Calu3 (cell line): ENCODE measurements at regions of chr13 and their contacts with region 1.

Region 1: GRCh38 chr13:97030705-97031452 is 36.6 kb upstream of the OXGR1 start:
- DNase-seq: no peak
- H3K4me3 Mint-ChIP-seq: no peak overlapping the region
- H3K27ac Mint-ChIP-seq: no peak overlapping the region
- H3K4me1 Mint-ChIP-seq: no peaks in the 10 kb centered on the region
- H3K27me3 Mint-ChIP-seq: no peaks in the 10 kb centered on the region
- CTCF ChIP-seq: no peak

Region 2: GRCh38 chr13:96822895-96823294 is 208.0 kb before region 1 on chr13:
- CTCF ChIA-PET with region 1: no interaction called
- intact Hi-C with region 1: loop called (anchors 5 kb)
- DNase-seq: peak; percentile 4
- H3K4me3 Mint-ChIP-seq: no peak overlapping the region
- H3K27ac Mint-ChIP-seq: no peak overlapping the region
- H3K4me1 Mint-ChIP-seq: no peaks in the 10 kb centered on the region
- H3K27me3 Mint-ChIP-seq: no peaks in the 10 kb centered on the region
- CTCF ChIP-seq: no peak

Region 3: GRCh38 chr13:97082461-97083207 is 51.8 kb after region 1 on chr13:
- CTCF ChIA-PET with region 1: no interaction called
- intact Hi-C with region 1: loop called (anchors 10 kb)
- DNase-seq: no peak
- H3K4me3 Mint-ChIP-seq: no peak overlapping the region
- H3K27ac Mint-ChIP-seq: no peak overlapping the region
- H3K4me1 Mint-ChIP-seq: no peaks in the 10 kb centered on the region
- H3K27me3 Mint-ChIP-seq: no peaks in the 10 kb centered on the region
- CTCF ChIP-seq: no peak

Region 4: DNA sequence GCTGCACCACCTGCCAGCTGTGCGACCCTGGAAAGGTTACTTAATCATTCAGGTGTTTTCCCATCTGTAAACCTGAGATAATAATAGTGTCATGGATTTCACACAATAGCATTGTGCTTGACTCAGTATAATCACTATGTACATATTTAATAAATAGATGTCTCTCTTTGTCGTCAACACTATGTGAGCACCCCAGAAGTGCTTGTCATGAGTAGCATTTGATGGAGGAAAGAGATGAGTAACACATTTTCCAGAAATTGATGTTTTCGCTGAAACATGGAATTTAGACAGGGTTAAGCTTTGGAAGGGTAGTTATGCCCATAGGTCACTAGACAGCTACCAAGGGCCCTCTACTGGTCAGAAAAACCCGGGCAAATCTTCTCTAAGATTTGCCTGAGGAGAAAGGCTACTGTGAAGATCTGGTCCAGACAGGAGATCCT is 181.7 kb after region 1 on chr13:
- CTCF ChIA-PET with region 1: no interaction called
- intact Hi-C with region 1: loop called (anchors 1 kb)
- DNase-seq: no peak
- H3K4me3 Mint-ChIP-seq: no peak overlapping the region
- H3K27ac Mint-ChIP-seq: peak overlapping the region; percentile 78
- H3K4me1 Mint-ChIP-seq: peaks cover 26% of the 10 kb centered on the region
- H3K27me3 Mint-ChIP-seq: no peaks in the 10 kb centered on the region
- CTCF ChIP-seq: no peak

Region 5: DNA sequence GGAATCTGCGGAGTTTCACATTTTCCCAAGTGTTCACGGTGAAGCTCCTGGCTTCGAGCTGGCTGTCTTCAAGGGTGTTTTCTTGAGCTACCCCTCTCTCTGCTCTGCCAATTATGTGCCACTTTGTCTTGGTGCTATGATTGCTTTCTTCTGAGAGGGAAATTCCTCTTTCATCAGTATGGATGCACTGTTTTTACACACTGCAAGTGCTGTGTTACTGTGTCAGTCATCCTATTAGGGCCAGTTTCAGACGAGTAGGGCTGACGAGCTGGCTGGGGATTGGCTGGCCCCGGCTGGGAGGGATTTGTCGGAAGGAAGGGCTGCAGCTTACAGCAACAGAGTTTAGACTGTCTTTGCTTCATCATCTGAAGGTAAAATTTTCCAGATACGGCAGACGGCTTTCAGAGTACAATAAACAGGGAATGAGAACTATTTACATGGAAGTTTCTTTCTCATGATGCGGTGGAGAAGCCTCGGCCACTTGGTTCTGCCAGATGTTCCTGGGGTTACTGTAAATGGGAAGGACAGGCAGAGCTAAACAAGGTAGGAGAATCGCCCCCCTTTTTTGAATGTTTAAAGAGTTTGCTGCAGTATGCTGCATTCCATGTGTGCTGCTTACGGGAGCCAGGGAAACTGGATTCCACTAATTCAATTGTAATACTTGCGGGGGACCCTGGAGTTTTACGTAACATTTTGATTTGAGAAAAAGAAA is 191.3 kb after region 1 on chr13 and contains the start of gene MBNL2:
- CTCF ChIA-PET with region 1: no interaction called
- intact Hi-C with region 1: loop called (anchors 2 kb)
- DNase-seq: peak; percentile 75
- H3K4me3 Mint-ChIP-seq: peak within 1 kb of the TSS; percentile 78
- H3K27ac Mint-ChIP-seq: peak within 1 kb of the TSS; percentile 95
- H3K4me1 Mint-ChIP-seq: peaks cover 26% of the 10 kb centered on the region
- H3K27me3 Mint-ChIP-seq: no peaks in the 10 kb centered on the region
- CTCF ChIP-seq: no peak
- total RNA-seq, gene MBNL2: 29.8 and 37.1 TPM in 2 replicates

Region 6: DNA sequence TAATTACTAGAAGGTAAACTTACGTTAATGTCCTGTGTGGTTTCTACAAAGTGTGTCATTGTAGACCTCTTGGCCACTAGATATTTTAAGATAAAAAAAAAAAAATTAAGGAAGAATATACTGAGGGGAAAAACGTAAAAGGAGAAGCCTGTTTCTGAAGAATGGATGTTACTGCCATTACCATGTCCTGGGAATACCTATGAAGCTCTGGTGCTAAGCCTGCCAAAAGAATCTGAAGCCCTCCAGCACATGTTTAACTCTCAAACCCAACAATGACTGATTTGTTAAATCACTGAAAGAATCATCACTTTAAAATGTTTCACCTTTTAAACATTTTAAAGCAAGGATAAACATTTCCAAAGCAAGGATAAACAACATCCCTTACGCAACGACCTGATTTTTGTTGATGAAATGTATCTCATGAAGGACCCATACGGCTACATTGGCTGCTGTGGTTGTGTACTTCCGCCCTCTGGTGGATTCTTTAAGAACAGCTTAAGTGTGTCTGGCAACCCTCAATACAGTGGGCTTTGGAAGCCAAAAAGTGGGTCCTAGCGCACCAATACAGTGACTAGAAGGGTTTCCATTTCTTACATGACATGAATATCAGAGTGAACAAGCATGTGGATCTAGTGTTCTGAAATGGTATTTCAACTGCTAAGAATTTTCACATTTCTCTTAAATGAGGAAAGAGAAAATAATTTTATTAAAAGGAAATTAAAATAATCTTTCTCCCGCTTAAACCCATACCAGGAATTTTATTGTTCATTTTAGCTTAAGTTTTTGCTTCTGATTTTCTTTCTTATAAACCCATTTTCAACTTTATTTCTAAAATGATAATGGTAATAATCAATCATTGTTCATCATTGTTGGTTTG is 328.5 kb after region 1 on chr13:
- CTCF ChIA-PET with region 1: no interaction called
- intact Hi-C with region 1: loop called (anchors 5 kb)
- DNase-seq: peak; percentile 9
- H3K4me3 Mint-ChIP-seq: no peak overlapping the region
- H3K27ac Mint-ChIP-seq: no peak overlapping the region
- H3K4me1 Mint-ChIP-seq: no peaks in the 10 kb centered on the region
- H3K27me3 Mint-ChIP-seq: no peaks in the 10 kb centered on the region
- CTCF ChIP-seq: no peak